CD8-positive, alpha-beta T cell (primary cell): ENCODE measurements at regions of chr6 and their contacts with region 1.

Region 1: GRCh38 chr6:127748290-127748689 is 152.6 kb downstream of the THEMIS start:
- DNase-seq: peak in 1 of 9 experiments; percentile 12
- ATAC-seq: peak; percentile 55
- H3K4me3 ChIP-seq: no peak overlapping the region
- H3K4me3 Mint-ChIP-seq: peak overlapping the region; percentile 4
- H3K27ac ChIP-seq: peak overlapping the region in 1 of 2 experiments; percentile 40
- H3K27ac Mint-ChIP-seq: peak overlapping the region; percentile 83
- H3K4me1 ChIP-seq: peaks cover 50% of the 10 kb centered on the region
- H3K4me1 Mint-ChIP-seq: peaks cover 71% of the 10 kb centered on the region
- H3K27me3 ChIP-seq: no peaks in the 10 kb centered on the region
- H3K27me3 Mint-ChIP-seq: no peaks in the 10 kb centered on the region
- CTCF ChIP-seq: no peak

Region 2: GRCh38 chr6:127716465-127716864 is 31.8 kb before region 1 on chr6:
- CTCF ChIA-PET with region 1: no interaction called
- POLR2A ChIA-PET with region 1: no interaction called
- intact Hi-C with region 1: no loop called
- DNase-seq: no peak
- ATAC-seq: no peak
- H3K4me3 ChIP-seq: no peak overlapping the region
- H3K4me3 Mint-ChIP-seq: no peak overlapping the region
- H3K27ac ChIP-seq: no peak overlapping the region
- H3K27ac Mint-ChIP-seq: peak overlapping the region; percentile 64
- H3K4me1 ChIP-seq: no peaks in the 10 kb centered on the region
- H3K4me1 Mint-ChIP-seq: peaks cover 51% of the 10 kb centered on the region
- H3K27me3 ChIP-seq: no peaks in the 10 kb centered on the region
- H3K27me3 Mint-ChIP-seq: no peaks in the 10 kb centered on the region
- CTCF ChIP-seq: no peak

Region 3: DNA sequence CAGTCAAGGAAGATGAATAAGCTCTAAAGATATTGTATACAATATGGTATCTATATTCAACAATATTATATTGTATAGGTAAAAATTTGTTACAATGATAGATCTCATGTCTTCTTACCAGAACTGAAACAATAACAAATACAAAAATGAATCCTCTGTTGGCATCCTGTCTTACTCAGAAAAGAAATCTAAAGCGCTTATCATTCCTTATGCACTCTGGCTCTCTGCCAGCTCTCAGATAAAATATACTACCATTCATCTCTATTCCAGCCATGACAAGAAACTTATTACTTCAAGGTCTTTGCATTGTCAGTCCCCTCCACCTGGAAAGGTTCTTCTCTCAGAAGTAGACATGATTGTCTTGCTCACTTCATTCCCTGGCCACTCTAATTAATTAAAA is 14.0 kb after region 1 on chr6:
- CTCF ChIA-PET with region 1: no interaction called
- POLR2A ChIA-PET with region 1: interaction called, 4 read pairs
- intact Hi-C with region 1: loop called in 1 of 2 experiments (anchors 1 kb)
- DNase-seq: peak in 3 of 9 experiments; percentile 15 to 38 (median 18)
- ATAC-seq: peak; percentile 38
- H3K4me3 ChIP-seq: no peak overlapping the region
- H3K4me3 Mint-ChIP-seq: no peak overlapping the region
- H3K27ac ChIP-seq: peak overlapping the region in 1 of 2 experiments; percentile 10
- H3K27ac Mint-ChIP-seq: peak overlapping the region; percentile 75
- H3K4me1 ChIP-seq: peaks cover 38% of the 10 kb centered on the region
- H3K4me1 Mint-ChIP-seq: peaks cover 62% of the 10 kb centered on the region
- H3K27me3 ChIP-seq: no peaks in the 10 kb centered on the region
- H3K27me3 Mint-ChIP-seq: no peaks in the 10 kb centered on the region
- CTCF ChIP-seq: no peak